GM10248 (cell line): ENCODE measurements at regions of chr19 and their contacts with region 1.

Region 1: DNA sequence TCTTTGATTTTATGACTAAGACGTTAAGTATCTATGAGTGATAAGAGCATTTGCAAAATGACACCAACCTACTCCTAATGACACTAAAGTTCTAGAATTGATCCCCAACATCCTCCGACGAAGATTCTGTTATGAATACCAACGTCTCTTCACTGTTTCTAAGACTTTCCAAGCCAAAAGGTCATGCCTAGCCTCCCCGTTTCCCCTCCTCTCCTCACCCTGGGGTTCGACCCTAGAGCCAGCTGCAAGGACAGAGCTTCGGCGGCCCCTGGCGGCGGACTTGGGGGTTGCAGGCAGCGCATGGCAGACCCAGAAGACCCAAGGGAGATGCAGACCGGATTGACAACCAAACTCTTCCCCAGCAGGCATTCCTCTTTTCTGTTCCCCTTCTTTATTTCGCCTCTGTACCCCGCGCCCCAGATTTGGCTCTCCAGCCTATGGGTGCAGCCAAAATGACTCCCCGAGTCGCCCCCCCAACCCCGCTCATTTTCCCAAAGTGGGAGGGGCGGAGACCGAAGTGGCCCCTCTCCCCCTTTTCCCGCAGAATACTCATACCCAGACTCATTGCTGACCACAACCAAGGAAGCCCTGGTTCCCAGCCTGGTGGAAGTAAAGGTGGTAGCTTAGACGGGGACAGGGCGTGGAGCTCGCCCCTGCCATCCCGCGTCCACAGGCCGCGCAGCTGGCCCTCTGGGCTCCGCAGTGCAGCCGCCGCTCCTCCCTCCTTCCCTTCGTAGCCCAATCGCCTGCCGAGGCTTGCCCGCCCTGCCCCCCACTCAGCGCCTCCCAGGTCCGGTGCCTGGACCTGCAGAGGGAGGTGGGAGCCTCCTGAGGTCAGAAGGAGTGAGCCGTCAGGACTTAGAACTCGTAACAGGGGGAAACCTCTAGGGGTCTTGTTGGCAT is 4.1 kb upstream of the EML2 start:
- DNase-seq: peak; percentile 85
- CTCF ChIP-seq: peak; percentile 99

Region 2: DNA sequence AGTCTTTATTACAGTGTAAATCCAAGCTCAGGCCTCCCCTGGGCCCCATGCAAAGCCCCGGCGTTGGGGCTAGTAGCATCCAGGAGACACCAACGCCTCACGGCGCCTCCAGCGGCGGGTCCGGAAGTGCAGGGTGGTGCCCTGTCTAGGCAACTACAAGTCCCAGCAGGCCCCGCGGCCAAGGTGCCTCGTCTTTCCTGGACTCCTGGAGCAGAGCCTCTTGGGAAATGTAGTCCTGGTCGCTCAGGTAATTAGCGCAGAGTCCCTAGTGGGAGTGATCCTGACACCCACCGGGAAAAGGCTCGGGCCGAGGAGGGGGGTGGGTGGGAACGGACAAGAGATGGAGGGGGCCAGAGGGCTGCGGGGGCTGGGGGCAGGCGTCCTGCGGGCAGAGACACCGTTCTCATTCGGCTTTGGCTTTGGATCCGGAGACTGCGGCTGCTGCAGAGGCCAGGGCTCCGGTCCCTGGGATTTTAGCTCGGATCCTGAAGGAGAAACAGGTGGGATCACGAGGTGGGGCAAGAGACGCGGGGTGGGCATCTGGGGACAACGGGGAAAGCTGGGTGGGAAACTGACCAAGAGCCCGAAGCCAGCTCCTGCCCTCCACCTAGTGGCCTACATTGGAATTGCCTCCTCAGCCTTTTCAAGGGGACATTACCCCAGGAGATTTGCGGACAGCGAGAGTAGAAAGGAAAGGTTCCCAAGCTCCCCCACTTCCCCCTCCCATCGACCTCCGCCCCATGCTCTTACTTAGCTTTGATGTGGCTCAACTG is 157.8 kb before region 1 on chr19:
- CTCF ChIA-PET with region 1: interaction called, 41 read pairs
- POLR2A ChIA-PET with region 1: no interaction called
- DNase-seq: peak; percentile 92
- CTCF ChIP-seq: peak; percentile 91

Region 3: GRCh38 chr19:45569619-45570421 is 73.5 kb before region 1 on chr19:
- CTCF ChIA-PET with region 1: interaction called, 22 read pairs
- POLR2A ChIA-PET with region 1: interaction called, 4 read pairs
- DNase-seq: peak; percentile 66
- CTCF ChIP-seq: peak; percentile 85

Region 4: DNA sequence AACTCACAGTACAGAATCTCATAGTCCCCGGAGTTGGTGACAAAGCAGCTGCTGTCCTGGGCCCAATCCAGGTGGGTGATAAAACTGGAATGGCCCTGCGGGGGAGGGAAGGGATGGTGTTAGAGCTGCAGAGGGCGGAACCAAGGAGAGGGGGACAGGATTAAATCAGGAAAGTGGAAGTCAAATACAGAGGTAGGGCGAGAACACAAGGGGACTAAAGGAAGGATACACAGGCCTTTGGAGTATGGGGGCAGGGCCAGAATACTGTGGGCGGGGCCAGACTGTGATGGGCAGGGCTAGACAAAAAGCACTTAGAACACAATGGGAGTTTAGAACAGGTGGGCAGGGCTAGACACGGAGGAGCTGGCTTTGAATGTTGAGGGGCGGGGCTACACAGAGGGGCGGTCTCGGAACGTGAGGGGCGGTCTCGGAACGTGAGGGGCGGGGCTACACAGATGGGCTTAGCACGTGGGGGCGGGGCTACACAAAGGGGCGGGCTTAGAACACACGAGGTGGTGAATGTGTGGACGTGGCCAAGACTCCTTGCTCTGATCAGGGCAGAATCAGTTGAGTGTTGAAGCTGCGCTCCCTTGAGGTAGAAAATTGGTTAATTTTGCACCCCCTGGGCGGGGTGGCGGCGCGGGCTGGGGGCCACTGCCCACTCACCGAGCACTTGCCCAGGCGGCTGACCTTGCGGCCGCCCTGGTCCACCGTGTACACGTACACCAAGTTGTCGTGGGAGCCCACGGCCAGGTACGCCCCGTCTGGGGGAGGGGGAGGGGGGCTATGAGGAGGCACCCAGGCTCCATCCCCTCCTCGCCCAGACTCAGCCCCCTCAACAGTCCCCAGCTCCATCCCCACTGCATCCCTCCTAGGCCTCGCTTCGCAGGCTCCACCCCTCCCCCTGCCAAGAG is 27.2 kb before region 1 on chr19:
- CTCF ChIA-PET with region 1: interaction called, 57 read pairs
- POLR2A ChIA-PET with region 1: interaction called, 4 read pairs
- DNase-seq: peak; percentile 90
- CTCF ChIP-seq: no peak

Region 5: DNA sequence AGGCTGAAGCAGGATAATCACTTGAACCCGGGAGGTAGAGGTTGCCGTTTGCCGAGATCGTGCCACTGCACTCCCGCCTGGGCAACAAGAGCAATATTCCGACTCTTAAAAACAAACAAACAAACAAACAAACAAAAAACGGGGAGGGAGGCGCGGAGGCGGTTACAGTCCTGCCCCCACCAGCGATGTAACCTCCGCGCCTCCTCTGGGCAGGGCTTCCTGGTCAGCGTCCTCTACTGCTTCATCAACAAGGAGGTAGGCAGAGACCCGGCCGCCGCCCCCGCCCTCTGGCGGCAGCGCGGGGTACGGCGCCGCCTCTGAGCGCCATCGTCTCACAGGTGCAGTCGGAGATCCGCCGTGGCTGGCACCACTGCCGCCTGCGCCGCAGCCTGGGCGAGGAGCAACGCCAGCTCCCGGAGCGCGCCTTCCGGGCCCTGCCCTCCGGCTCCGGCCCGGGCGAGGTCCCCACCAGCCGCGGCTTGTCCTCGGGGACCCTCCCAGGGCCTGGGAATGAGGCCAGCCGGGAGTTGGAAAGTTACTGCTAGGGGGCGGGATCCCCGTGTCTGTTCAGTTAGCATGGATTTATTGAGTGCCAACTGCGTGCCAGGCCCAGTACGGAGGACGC is 38.2 kb after region 1 on chr19:
- CTCF ChIA-PET with region 1: interaction called, 34 read pairs
- POLR2A ChIA-PET with region 1: no interaction called
- DNase-seq: peak; percentile 85
- CTCF ChIP-seq: peak; percentile 89